Endothelial cell of umbilical vein (primary cell): ENCODE measurements at regions of chr14 and their contacts with region 1.

Region 1: DNA sequence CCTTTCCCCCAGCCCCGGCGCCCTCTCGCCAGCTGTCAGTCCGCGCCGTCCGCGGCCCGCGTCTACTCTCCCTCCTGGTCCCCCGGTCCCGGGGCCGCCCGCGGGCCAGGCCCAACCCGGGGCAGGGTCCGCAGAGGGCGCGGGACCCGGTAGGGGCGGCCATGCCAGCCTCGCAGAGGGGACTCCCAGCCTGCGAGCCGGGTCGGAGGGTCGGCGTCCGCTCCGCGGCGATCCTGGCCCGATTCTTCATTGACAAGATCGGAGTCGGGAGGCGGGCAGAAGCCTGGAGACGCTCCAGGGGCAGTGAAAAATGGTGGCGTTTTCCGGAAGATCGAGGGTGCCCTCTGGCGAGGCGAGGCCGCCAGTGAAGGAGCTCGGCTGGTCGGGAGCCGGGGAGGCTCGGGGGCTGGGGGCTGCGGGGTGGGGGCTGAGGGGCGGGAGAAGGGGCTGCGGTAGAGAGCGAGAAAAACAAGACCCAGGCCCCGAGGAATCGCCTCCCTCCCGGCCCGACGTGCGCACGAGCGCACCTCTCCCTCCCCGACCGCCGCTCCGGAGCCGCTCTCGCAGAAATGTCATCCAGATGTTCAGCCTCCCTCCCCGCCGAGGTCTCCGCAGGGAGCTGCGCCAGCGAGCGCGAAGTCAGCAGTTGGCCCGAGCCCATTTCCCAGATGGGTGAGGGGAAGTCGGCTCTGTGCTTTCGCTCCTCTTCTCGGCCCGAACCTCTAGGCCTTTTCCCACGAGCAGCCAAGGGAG is 647 bp upstream of the TGFB3 start:
- DNase-seq: peak; percentile 78
- H3K4me3 ChIP-seq: peak overlapping the region; percentile 66 to 73 (median 68)
- H3K27ac ChIP-seq: peak overlapping the region; percentile 62
- H3K4me1 ChIP-seq: peaks cover 28% of the 10 kb centered on the region
- H3K27me3 ChIP-seq: no peaks in the 10 kb centered on the region
- CTCF ChIP-seq: peak; percentile 32 to 74
- POLR2A ChIP-seq: no peak

Region 2: GRCh38 chr14:75577729-75578101 is 404.7 kb before region 1 on chr14:
- CTCF ChIA-PET with region 1: interaction called, 26 read pairs
- POLR2A ChIA-PET with region 1: no interaction called
- dilution Hi-C with region 1: no loop called
- intact Hi-C with region 1: loop called (anchors 1 kb)
- DNase-seq: peak; percentile 82
- H3K4me3 ChIP-seq: peak overlapping the region; percentile 50 to 83 (median 64)
- H3K27ac ChIP-seq: no peak overlapping the region
- H3K4me1 ChIP-seq: peaks cover 18% of the 10 kb centered on the region
- H3K27me3 ChIP-seq: peaks cover 0 to 4% of the 10 kb centered on the region in 2 experiments
- CTCF ChIP-seq: peak; percentile 70 to 83
- POLR2A ChIP-seq: no peak

Region 3: DNA sequence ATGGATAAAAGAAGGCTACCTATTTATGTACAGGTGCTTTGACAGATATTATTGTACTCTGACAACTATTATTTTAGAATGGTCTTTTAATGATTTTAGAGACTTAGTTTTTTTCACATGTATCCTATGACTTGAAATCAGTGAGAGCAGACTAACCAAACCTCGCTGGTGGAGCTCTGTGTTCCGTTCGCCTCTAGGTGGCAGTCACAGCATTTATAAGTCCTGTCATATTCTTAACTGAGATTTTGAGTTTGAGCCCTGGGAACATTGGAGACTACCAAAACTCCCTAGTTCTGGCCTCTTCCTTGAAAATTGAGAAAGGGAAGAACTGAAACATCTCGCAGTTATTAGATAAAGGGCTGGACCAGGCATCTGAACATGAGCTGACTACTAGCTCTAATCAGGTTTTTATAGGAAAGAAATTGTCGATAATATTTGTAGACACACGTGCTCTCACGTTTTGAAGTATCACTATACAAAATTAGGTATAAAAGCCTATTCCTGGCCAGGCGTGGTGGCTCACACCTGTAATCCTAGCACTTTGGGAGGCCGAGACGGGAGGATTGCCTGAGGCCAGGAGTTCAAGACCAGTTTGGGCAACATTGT is 273.1 kb before region 1 on chr14:
- CTCF ChIA-PET with region 1: interaction called, 617 read pairs
- POLR2A ChIA-PET with region 1: no interaction called
- dilution Hi-C with region 1: loop called (anchors 25 kb)
- intact Hi-C with region 1: loop called (anchors 1 kb)
- DNase-seq: peak; percentile 79
- H3K4me3 ChIP-seq: no peak overlapping the region
- H3K27ac ChIP-seq: no peak overlapping the region
- H3K4me1 ChIP-seq: no peaks in the 10 kb centered on the region
- H3K27me3 ChIP-seq: no peaks in the 10 kb centered on the region
- CTCF ChIP-seq: peak; percentile 72 to 75
- POLR2A ChIP-seq: no peak

Region 4: DNA sequence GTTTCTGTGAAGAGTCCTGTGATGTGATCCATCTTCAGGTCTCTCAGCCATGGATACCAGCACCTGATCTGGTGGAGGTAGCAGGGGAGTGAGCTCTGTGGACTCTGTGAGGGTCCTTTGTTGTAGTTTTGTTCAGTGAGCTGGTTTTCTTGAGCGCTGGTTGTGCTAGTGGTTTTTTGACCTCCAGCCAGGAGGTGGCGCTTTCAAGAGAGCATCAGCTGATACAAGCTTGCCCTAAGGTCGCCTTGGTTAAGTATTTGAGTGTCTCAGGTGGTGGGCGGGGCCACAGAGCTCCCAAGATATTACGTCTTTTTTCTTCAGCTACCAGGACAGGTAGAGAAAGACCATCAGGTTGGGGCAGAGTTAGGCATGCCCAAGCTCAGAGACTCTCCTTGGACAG is 181.7 kb before region 1 on chr14:
- CTCF ChIA-PET with region 1: interaction called, 195 read pairs
- POLR2A ChIA-PET with region 1: no interaction called
- dilution Hi-C with region 1: no loop called
- intact Hi-C with region 1: no loop called
- DNase-seq: no peak
- H3K4me3 ChIP-seq: no peak overlapping the region
- H3K27ac ChIP-seq: no peak overlapping the region
- H3K4me1 ChIP-seq: no peaks in the 10 kb centered on the region
- H3K27me3 ChIP-seq: no peaks in the 10 kb centered on the region
- CTCF ChIP-seq: no peak
- POLR2A ChIP-seq: no peak

Region 5: DNA sequence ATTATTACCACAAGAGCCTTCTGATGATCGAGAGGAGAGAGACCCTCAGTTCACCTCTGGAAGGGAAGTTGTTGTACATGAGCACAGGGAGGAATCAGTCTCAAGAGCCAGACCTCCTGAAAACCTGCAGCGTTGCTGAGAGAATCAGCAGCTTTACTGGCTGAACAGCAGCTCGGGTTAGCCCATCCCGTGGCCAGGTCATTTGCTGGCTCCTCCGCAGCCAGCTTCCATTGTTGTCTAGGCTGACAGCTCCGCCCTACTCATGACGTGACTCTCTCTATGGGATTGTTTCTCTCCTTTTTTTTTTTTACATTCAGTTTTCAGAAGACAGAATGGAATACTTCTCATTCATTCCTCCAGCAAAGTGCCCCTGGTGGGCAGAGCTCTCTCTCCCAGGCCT is 70.6 kb before region 1 on chr14:
- CTCF ChIA-PET with region 1: interaction called, 282 read pairs
- POLR2A ChIA-PET with region 1: no interaction called
- dilution Hi-C with region 1: no loop called
- intact Hi-C with region 1: no loop called
- DNase-seq: peak; percentile 78
- H3K4me3 ChIP-seq: no peak overlapping the region
- H3K27ac ChIP-seq: peak overlapping the region; percentile 41
- H3K4me1 ChIP-seq: peaks cover 3% of the 10 kb centered on the region
- H3K27me3 ChIP-seq: no peaks in the 10 kb centered on the region
- CTCF ChIP-seq: no peak
- POLR2A ChIP-seq: no peak

Region 6: DNA sequence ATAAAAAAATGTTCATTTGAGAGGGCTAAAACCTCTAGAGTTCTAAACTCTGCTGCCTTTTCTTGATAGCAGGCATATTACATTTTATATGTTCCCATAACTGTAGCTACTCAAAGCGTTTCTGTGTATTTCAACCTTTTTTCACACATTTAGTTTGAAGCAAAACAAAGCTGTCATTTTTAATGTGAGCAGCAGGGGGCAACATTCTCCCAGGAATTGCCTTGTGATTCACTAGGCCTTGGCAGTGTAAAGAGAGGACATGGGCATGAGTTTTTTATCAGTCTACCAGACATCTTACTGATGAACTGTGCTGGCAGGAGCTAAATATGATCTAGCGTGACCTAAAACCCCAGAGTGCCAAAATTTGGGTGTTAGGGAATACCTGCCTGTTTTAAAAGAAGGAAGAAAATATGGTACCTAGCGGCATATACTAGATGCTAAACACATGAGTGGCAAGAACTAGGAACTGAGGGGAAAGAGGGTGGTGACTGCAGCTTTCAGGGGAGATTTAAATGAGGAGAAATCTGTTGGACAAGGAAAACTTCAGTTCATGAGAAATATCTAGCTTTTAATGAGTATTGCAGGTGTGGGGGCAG is 68.5 kb after region 1 on chr14:
- CTCF ChIA-PET with region 1: interaction called, 13 read pairs
- POLR2A ChIA-PET with region 1: interaction called, 4 read pairs
- dilution Hi-C with region 1: no loop called
- intact Hi-C with region 1: no loop called
- DNase-seq: peak; percentile 72
- H3K4me3 ChIP-seq: no peak overlapping the region
- H3K27ac ChIP-seq: no peak overlapping the region
- H3K4me1 ChIP-seq: no peaks in the 10 kb centered on the region
- H3K27me3 ChIP-seq: no peaks in the 10 kb centered on the region
- CTCF ChIP-seq: peak; percentile 51 to 69
- POLR2A ChIP-seq: no peak

Region 7: GRCh38 chr14:76386915-76387782 is 404.7 kb after region 1 on chr14:
- CTCF ChIA-PET with region 1: interaction called, 9 read pairs
- POLR2A ChIA-PET with region 1: no interaction called
- dilution Hi-C with region 1: no loop called
- intact Hi-C with region 1: loop called (anchors 5 kb)
- DNase-seq: peak; percentile 63
- H3K4me3 ChIP-seq: no peak overlapping the region
- H3K27ac ChIP-seq: no peak overlapping the region
- H3K4me1 ChIP-seq: no peaks in the 10 kb centered on the region
- H3K27me3 ChIP-seq: peaks cover 21 to 39% of the 10 kb centered on the region in 2 experiments
- CTCF ChIP-seq: peak; percentile 98
- POLR2A ChIP-seq: no peak